ENCODE measurements at regions of chr13 and their contacts with region 1.

Region 1: DNA sequence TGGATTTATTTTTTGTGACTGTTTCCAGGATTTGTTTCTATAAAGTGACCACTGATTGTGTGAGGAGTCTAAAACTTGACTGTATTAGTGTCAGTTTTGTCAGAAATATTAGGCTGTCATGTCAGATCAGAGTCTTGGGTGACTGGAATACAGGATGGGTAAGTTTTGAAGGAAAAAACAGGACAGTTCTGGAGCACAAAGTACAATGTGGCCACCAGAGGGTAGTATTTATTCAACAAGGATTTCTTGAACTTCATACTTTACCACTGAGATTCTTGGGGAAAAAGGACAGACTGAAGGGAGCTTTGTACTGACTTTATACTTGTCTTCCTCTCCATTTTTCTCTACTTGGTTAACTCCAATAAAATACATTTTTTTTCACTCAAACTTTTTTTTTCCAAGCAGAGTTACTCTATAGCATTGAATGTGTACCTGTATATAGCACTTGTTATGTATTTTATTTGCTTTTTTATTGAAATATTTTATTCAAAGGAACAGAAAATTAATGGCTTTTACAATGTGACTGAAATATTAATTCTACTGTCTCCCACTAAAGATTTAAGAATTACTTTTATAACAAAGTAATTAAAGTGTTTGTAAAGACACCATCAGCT is 51.1 kb downstream of the LMO7 start:
- DNase-seq: peak in 1 of 2 experiments; percentile 54
- ATAC-seq: peak; percentile 75 to 79
- H3K4me3 ChIP-seq: no peak overlapping the region
- H3K27ac ChIP-seq: no peak overlapping the region
- H3K4me1 ChIP-seq: peaks cover 34% of the 10 kb centered on the region
- CTCF ChIP-seq: peak; percentile 62
- EP300 ChIP-seq: no peak
- POLR2A ChIP-seq: no peak
- RAD21 ChIP-seq: peak; percentile 68 to 71

Region 2: DNA sequence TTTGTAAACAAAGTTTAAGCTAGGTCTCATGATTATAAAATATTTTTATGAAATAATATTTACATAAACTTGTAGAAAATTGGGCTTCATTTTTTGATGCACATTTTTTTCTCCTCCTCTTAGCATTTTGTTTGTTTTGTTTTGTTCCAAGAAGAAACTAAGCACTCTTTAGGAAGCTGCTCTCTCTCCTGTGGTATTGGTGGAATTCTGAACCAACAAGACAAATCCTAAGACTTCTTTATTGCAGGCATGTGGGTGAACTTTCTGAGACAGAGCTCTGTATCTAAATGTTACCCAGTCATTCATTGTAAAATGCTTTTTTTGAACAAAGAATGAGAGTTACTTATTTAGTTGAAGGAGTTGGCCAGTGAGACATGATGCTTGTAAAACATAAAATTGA is 11.8 kb before region 1 on chr13:
- CTCF ChIA-PET with region 1: interaction called, 10 read pairs
- POLR2A ChIA-PET with region 1: no interaction called
- DNase-seq: no peak
- ATAC-seq: no peak
- H3K4me3 ChIP-seq: no peak overlapping the region
- H3K27ac ChIP-seq: no peak overlapping the region
- H3K4me1 ChIP-seq: 0 out of 3 replicates have a peak, but pooled peaks cover 4% of the 10 kb centered on the region
- CTCF ChIP-seq: no peak
- EP300 ChIP-seq: no peak
- POLR2A ChIP-seq: no peak
- RAD21 ChIP-seq: no peak

Measured in A549 (cell line).